Adrenal gland (tissue), 19 donors: ENCODE measurements at regions of chr4 and their contacts with region 1.

Region 1: DNA sequence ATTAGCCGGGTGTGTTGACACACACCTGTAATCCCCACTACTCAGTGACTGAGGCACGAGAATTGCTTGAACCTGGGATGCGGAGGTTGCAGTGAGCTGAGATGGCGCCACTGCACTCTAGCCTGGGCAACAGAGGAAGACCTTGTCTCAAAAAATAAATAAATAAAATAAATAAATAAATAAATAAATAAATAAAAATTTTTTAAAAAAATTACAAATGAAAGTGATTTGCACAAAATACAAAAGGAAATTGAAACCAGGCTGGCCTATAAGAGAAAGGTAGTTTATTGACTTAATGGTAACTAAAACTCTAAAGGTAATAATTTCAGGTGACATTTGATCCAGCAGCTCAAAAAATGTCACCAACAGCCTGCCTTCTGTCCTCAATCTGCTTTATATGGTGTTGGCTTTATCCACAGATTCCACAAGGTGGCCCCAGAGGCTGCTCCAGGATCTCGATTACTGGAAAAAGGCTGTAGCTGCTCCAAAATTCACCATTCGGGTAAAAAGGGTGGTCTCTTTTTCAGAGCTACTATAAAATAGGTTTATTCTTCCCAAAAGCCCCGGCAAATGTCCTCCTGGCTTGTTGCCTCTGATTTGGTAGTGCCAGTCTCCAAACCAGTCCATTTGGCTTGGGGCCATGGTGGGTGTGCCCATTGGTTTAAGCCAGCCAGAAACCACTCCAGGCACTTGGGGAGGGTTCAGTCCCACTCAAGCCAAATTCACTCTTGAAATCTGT is 61.4 kb upstream of the TRIM2 start:
- DNase-seq: peak; percentile 72 to 88 (median 81)
- H3K4me3 ChIP-seq: no peak overlapping the region
- H3K27ac ChIP-seq: peak overlapping the region in 1 of 5 donors; percentile 28
- H3K4me1 ChIP-seq: peaks cover 9 to 14% of the 10 kb centered on the region in 2 donors
- H3K27me3 ChIP-seq: no peaks in the 10 kb centered on the region
- CTCF ChIP-seq: peak; percentile 62 to 94 (median 88)
- POLR2A ChIP-seq: no peak

Region 2: DNA sequence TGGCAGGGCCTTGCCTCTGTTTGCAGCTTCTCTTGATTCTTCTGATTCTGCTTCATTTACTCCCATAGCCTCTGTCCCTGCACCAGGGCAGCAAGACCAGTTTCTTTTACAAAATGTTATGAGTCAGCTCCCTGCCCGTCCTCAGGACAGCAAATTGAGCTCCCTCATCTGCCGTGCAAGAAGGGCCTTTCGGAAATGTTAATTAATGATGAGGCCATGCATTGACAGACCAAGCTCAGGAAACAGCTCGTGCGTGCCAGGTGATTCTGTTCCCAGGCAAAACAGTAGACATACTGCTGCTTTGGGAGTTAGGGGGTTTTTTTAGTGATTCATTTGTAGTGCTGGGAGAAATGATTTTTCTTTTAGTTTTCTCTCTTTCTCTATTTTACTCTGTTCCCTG is 838.6 kb before region 1 on chr4:
- intact Hi-C with region 1: no loop called
- DNase-seq: no peak
- H3K4me3 ChIP-seq: no peak overlapping the region
- H3K27ac ChIP-seq: no peak overlapping the region
- H3K4me1 ChIP-seq: no peaks in the 10 kb centered on the region
- H3K27me3 ChIP-seq: no peaks in the 10 kb centered on the region
- CTCF ChIP-seq: no peak
- POLR2A ChIP-seq: no peak

Region 3: DNA sequence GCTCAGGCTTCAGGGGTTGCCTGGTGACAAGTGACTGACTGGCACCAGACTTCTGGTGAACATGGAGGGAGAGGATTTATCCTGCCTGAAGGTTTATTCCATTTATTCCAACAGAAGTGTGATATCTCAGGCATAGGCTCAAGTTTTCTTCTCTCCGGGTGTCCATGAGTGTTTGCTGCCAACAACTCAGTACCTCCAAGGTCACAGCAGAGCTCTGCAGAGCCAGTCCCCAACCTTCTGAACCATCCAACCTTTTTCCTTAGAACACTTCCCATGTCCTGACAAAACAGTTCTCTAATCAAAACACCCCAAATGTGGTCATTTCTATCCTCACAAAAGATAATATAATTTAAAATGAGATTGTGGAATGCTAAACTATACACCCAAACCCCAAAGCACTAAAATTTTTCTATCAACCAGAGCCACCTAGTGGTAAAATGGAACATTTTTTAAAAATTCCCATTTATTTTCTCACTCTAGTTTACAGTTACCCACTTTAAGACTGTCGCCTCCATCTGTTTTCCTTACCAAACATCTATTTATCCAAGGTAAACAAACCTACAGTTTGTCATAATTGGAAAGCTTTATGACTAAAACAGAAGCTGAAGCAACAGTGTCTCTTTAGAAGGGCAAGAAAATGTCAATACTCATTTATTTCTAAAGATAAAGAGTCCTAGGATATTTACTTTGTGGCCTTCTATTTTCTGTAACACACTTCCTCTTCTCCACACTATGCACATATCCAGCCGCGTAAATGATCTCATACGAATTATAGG is 502.6 kb before region 1 on chr4:
- intact Hi-C with region 1: no loop called
- DNase-seq: peak in 5 of 7 donors; percentile 22 to 45 (median 35)
- H3K4me3 ChIP-seq: no peak overlapping the region
- H3K27ac ChIP-seq: no peak overlapping the region
- H3K4me1 ChIP-seq: peaks cover 0 to 4% of the 10 kb centered on the region in 2 donors
- H3K27me3 ChIP-seq: no peaks in the 10 kb centered on the region
- CTCF ChIP-seq: peak; percentile 48 to 75 (median 67)
- POLR2A ChIP-seq: no peak

Region 4: DNA sequence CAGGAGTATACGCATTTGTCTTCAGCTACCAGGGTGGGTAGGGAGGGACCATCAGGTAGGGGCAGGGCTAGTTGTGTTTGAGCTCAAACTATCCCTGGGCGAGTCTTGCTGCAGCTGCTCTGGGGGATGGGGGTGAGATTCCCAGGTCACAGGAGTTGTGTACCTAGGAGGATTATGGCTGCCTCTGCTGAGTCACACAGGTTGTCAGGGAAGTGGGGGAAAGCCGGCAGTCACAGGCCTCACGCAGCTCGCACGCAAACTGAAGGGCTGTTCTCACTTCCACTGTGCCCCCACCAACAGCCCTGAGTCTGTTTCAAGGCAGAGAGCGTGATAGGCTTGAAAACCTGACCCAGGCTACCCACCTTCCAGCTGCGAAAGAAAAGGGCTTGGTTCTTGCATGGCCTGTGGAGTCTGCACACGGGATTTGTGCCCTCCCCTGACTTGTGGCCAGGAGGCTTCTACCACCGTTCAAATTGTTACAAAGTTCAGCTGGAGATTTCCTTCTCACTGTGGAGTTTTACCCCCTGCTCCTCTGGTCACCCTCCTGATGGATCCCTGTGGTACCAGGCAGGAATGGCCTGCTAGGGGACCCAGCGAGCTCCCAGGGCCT is 299.3 kb before region 1 on chr4:
- intact Hi-C with region 1: no loop called
- DNase-seq: no peak
- H3K4me3 ChIP-seq: no peak overlapping the region
- H3K27ac ChIP-seq: no peak overlapping the region
- H3K4me1 ChIP-seq: peaks cover 0 to 3% of the 10 kb centered on the region in 2 donors
- H3K27me3 ChIP-seq: no peaks in the 10 kb centered on the region
- CTCF ChIP-seq: no peak
- POLR2A ChIP-seq: no peak

Region 5: GRCh38 chr4:153204247-153205027 is 61.6 kb after region 1 on chr4 and contains the start of gene TRIM2:
- intact Hi-C with region 1: loop called in 1 of 2 experiments (anchors 5 kb)
- DNase-seq: peak in 6 of 7 donors; percentile 35 to 76 (median 53)
- H3K4me3 ChIP-seq: peak within 1 kb of the TSS in 1 of 4 donors; percentile 25
- H3K27ac ChIP-seq: no peak within 1 kb of the TSS
- H3K4me1 ChIP-seq: no peaks in the 10 kb centered on the region
- H3K27me3 ChIP-seq: no peaks in the 10 kb centered on the region
- CTCF ChIP-seq: no peak
- POLR2A ChIP-seq: no peak
- total RNA-seq, gene TRIM2: 22.2 to 130 (median 48.5) TPM

Region 6: GRCh38 chr4:153281476-153281875 is 138.6 kb after region 1 on chr4:
- intact Hi-C with region 1: no loop called
- DNase-seq: no peak
- H3K4me3 ChIP-seq: no peak overlapping the region
- H3K27ac ChIP-seq: no peak overlapping the region
- H3K4me1 ChIP-seq: no peaks in the 10 kb centered on the region
- H3K27me3 ChIP-seq: no peaks in the 10 kb centered on the region
- CTCF ChIP-seq: no peak
- POLR2A ChIP-seq: no peak